ENCODE measurements at regions of chr17 and their contacts with region 1.

Region 1: DNA sequence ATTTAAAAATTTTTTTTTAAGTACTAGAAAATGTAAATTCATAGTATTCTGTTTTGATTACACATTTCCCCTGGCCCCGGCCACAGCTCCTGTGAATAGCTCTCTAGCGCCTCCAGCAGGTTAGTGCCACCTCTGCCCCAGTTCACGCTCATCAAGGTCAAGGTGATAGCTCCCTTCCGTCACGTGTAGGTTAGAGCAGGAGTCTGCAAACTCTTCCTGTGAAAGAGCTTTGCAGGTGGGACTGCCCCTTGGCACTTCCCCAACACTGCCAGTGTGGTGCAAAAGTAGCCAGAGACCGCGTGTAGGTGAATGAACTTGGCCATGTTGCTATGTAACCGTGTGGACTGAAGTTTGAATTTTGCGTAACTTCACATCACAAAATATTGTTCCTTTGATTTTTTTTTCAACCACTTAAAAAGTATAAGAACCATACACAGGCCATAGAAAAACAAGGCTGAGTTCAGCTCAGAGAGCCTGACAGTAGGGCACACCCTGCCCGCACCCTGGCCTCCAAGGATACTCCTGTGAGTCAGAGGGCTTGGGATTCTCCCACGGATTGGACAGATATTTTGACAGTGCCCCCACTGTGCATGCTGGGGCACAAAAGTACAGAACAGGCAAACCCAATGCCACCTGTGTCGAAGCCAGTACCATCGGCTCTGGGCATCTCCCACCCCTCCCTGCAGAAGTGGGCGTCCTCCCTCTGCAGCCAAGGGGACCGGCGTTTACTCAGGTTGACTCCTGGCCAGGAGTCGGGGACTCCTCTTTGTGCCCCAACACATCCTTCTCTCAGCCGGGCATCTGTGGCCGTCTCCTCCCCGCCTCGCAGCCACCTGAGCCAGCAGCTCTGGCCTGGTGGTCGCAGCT is 92.0 kb upstream of the CHMP6 start:
- DNase-seq: peak; percentile 91
- H3K4me3 Mint-ChIP-seq: no peak overlapping the region
- H3K27ac Mint-ChIP-seq: no peak overlapping the region
- H3K4me1 Mint-ChIP-seq: peaks cover 56% of the 10 kb centered on the region
- H3K27me3 Mint-ChIP-seq: no peaks in the 10 kb centered on the region

Region 2: GRCh38 chr17:80575057-80575875 is 324.4 kb before region 1 on chr17:
- CTCF ChIA-PET with region 1: interaction called, 14 read pairs
- POLR2A ChIA-PET with region 1: no interaction called
- intact Hi-C with region 1: no loop called
- DNase-seq: peak; percentile 94
- H3K4me3 Mint-ChIP-seq: no peak overlapping the region
- H3K27ac Mint-ChIP-seq: no peak overlapping the region
- H3K4me1 Mint-ChIP-seq: peaks cover 9% of the 10 kb centered on the region
- H3K27me3 Mint-ChIP-seq: no peaks in the 10 kb centered on the region

Region 3: GRCh38 chr17:80761110-80761871 is 138.3 kb before region 1 on chr17:
- CTCF ChIA-PET with region 1: interaction called, 11 read pairs
- POLR2A ChIA-PET with region 1: no interaction called
- intact Hi-C with region 1: no loop called
- DNase-seq: peak; percentile 86
- H3K4me3 Mint-ChIP-seq: peak overlapping the region; percentile 68
- H3K27ac Mint-ChIP-seq: peak overlapping the region; percentile 96
- H3K4me1 Mint-ChIP-seq: peaks cover 73% of the 10 kb centered on the region
- H3K27me3 Mint-ChIP-seq: no peaks in the 10 kb centered on the region

Region 4: DNA sequence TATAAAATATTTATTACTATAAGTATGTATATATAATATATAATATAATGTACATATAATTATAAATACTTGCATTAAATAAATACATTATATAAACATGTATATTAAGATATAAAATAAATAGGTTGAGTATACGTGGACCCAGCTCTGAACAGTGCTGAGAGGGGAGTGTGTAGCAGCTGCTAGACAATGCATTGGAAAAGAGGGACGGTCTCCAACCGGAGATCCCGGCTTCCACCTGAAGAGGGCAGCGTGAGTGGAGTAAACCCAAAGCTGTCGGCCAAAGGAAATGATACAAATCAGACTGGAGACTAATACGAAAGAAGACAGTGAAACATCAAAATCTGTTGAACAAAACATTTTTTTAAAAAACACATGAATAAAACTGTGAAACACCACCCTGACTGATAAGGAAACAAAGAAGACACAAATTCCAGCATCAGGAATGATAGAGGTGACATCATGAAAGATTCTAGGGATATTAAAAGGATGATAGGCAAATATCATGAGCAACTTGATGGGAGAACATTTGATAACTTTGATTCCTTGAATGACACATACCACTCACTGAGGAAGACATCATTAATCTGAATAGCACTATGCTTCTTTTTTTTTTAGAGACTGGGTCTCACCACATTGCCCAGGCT is 33.4 kb before region 1 on chr17:
- CTCF ChIA-PET with region 1: interaction called, 27 read pairs
- POLR2A ChIA-PET with region 1: no interaction called
- intact Hi-C with region 1: loop called (anchors 2 kb)
- DNase-seq: peak; percentile 86
- H3K4me3 Mint-ChIP-seq: no peak overlapping the region
- H3K27ac Mint-ChIP-seq: peak overlapping the region; percentile 80
- H3K4me1 Mint-ChIP-seq: peaks cover 76% of the 10 kb centered on the region
- H3K27me3 Mint-ChIP-seq: no peaks in the 10 kb centered on the region

Region 5: GRCh38 chr17:80943346-80944145 is 43.9 kb after region 1 on chr17:
- CTCF ChIA-PET with region 1: no interaction called
- POLR2A ChIA-PET with region 1: no interaction called
- intact Hi-C with region 1: no loop called
- DNase-seq: no peak
- H3K4me3 Mint-ChIP-seq: no peak overlapping the region
- H3K27ac Mint-ChIP-seq: no peak overlapping the region
- H3K4me1 Mint-ChIP-seq: peaks cover 12% of the 10 kb centered on the region
- H3K27me3 Mint-ChIP-seq: no peaks in the 10 kb centered on the region